ENCODE measurements at regions of chr7 and their contacts with region 1.

Region 1: GRCh38 chr7:121395961-121396757 is at the start of gene FAM3C:
- DNase-seq: peak; percentile 100
- H3K4me3 ChIP-seq: peak within 1 kb of the TSS; percentile 93 to 99
- H3K27ac ChIP-seq: peak within 1 kb of the TSS; percentile 73 to 88
- H3K4me1 ChIP-seq: peaks cover 0 to 11% of the 10 kb centered on the region in 2 experiments; a peak in 2 of 4 replicates
- H3K27me3 ChIP-seq: no peaks in the 10 kb centered on the region
- CTCF ChIP-seq: peak; percentile 90
- EP300 ChIP-seq: peak; percentile 32 to 44; a peak in 2 of 4 replicates
- RAD21 ChIP-seq: peak; percentile 43
- polyA plus RNA-seq, gene FAM3C: 80.0 and 111 TPM in 2 replicates

Region 2: DNA sequence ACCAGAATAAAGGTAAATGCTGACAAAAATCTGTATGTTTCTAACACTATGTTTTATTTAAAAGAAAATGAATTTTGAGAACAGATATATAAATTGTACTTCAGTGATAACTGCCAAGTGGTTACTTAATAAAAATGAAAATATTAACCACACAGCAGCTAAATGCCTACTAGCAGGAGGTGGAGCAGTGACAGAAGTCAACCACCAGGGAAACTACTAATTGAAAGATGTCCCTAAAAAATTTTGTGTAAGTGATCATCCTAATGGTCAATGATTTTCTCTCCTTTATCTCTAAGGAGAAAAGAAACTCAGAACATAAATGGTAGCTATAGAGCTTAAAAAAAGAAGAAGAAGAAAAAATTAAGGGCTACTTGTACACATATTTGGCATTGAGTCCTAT is 44.5 kb before region 1 on chr7:
- CTCF ChIA-PET with region 1: interaction called, 28 read pairs
- POLR2A ChIA-PET with region 1: interaction called, 3 read pairs
- DNase-seq: no peak
- H3K4me3 ChIP-seq: no peak overlapping the region; a peak in 1 of 4 replicates
- H3K27ac ChIP-seq: no peak overlapping the region
- H3K4me1 ChIP-seq: no peaks in the 10 kb centered on the region; a peak in 1 of 4 replicates
- H3K27me3 ChIP-seq: no peaks in the 10 kb centered on the region
- CTCF ChIP-seq: peak; percentile 45
- EP300 ChIP-seq: no peak
- RAD21 ChIP-seq: no peak

Region 3: GRCh38 chr7:121372376-121373010 is 23.7 kb before region 1 on chr7:
- CTCF ChIA-PET with region 1: interaction called, 48 read pairs
- POLR2A ChIA-PET with region 1: interaction called, 5 read pairs
- DNase-seq: no peak
- H3K4me3 ChIP-seq: no peak overlapping the region
- H3K27ac ChIP-seq: peak overlapping the region; percentile 21 to 66
- H3K4me1 ChIP-seq: peaks cover 4 to 29% of the 10 kb centered on the region in 2 experiments; a peak in 3 of 4 replicates
- H3K27me3 ChIP-seq: no peaks in the 10 kb centered on the region
- CTCF ChIP-seq: no peak
- EP300 ChIP-seq: peak; percentile 45 to 63; a peak in 2 of 4 replicates
- RAD21 ChIP-seq: no peak

Region 4: GRCh38 chr7:121410829-121411596 is 14.9 kb after region 1 on chr7:
- CTCF ChIA-PET with region 1: interaction called, 50 read pairs
- POLR2A ChIA-PET with region 1: interaction called, 4 read pairs
- DNase-seq: no peak
- H3K4me3 ChIP-seq: no peak overlapping the region
- H3K27ac ChIP-seq: no peak overlapping the region
- H3K4me1 ChIP-seq: 0 out of 4 replicates have a peak, but pooled peaks cover 0 to 2% of the 10 kb centered on the region in 2 experiments
- H3K27me3 ChIP-seq: no peaks in the 10 kb centered on the region
- CTCF ChIP-seq: no peak
- EP300 ChIP-seq: no peak
- RAD21 ChIP-seq: no peak

Region 5: DNA sequence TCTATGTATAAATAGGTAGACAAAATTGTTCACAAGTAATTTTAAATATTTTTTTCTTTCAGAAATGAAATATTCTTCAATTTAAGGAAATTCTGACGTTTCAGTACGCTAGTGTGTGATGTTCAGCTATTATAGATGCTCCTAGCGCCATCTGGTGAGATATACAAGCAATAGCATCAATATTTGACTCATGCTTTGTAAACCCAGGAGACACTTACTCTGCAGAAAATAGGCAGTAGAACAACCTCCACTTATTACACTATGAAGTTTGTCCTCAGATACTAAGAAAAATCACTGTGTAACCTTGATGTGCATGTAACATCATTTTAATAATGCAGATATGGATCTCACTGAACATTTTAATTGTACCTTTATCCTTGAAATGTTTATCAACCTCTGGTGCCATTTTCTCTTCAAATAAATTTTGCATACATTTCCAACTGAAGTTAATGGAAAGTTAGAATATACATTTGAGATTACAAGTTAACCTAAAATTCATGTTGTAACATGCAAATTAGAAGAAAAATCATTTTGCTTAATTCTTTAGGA is 151.5 kb after region 1 on chr7:
- CTCF ChIA-PET with region 1: interaction called, 19 read pairs
- POLR2A ChIA-PET with region 1: no interaction called
- DNase-seq: peak; percentile 51
- H3K4me3 ChIP-seq: no peak overlapping the region
- H3K27ac ChIP-seq: no peak overlapping the region
- H3K4me1 ChIP-seq: peaks cover 8 to 18% of the 10 kb centered on the region in 2 experiments; a peak in 2 of 4 replicates
- H3K27me3 ChIP-seq: no peaks in the 10 kb centered on the region
- CTCF ChIP-seq: peak; percentile 98
- EP300 ChIP-seq: no peak
- RAD21 ChIP-seq: peak; percentile 98

Measured in SK-N-SH (cell line).